Activated naive CD4-positive, alpha-beta T cell treated with anti-CD3 and anti-CD28 coated beads for 36 hours (primary cell): ENCODE measurements at regions of chr6 and their contacts with region 1.

Region 1: DNA sequence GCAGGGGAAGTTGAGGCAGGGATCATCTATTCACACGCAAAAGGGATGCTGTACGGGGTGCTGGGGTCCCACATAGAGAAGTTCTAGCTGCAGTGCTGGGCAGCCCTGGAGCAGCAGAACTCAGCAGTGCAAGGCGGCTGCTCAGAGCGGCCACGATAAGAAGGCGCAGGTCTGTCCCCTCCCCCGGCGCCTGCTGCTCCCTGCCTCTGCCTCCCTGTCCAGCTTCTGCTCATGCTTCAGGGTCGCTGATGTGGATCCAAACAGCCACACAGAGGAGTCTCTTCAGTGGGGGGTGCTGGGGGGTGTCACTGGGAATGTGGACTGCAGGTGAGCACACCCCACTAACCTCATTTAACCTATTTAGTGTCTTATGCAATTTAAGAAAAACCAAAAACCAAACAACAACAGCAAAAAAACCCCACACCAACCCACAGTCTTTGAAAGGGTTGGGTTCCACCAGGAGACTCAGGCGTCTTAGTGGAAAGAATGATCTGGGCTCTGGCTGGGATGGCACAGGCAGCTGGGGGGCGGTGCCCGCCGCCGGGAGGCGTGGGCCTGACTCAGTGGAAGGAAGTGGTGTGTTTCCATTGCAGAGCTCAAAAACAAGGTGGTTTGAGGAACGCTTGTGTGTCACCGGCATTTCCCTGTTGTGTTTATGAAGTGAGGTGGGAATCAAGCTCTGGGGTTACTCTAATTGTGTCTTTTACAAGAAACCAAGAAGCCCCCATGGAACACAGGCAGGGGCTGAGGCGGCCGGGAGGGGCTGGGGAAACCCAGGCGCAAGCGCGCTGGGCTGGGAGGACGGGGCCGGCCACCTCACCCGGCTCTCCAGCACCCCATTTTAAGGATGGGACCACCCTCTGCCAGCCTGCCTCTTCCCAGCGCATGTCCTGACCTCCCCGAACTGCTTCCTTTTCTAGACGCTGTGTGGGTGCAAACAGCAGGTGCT is 55.1 kb downstream of the IRF4 start:
- DNase-seq: peak; percentile 96
- H3K4me3 Mint-ChIP-seq: peak overlapping the region; percentile 43
- H3K27ac Mint-ChIP-seq: peak overlapping the region; percentile 95
- H3K4me1 Mint-ChIP-seq: peaks cover 50% of the 10 kb centered on the region
- H3K27me3 Mint-ChIP-seq: no peaks in the 10 kb centered on the region

Region 2: DNA sequence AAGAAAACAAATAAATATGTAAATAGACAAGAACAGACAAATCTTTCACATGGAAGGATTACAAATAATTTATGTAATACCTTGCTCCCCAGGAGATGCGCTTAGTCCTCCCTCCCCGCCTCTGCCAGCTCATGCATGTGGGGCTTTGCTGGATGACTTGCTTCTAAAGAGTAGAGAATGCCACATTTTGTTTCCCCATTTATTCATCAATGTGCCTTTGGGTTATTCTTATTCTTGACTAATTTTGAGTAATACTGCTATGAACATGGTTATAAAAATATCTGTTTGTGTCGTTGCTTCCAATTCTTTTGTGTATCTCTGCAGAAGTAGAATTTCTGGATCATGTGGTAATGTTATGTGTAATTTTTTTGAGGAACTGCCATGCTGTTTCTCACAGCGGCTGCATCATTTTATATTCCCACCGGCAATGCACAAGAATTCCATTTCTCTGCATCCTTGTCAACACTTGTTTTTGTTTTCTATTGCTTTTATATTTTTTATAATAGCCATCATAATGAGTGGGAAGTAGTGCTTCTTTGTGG is 178.2 kb before region 1 on chr6:
- CTCF ChIA-PET with region 1: no interaction called
- intact Hi-C with region 1: no loop called
- DNase-seq: no peak
- H3K4me3 Mint-ChIP-seq: no peak overlapping the region
- H3K27ac Mint-ChIP-seq: no peak overlapping the region
- H3K4me1 Mint-ChIP-seq: peaks cover 21% of the 10 kb centered on the region
- H3K27me3 Mint-ChIP-seq: no peaks in the 10 kb centered on the region

Region 3: GRCh38 chr6:399785-400534 is 46.7 kb before region 1 on chr6:
- CTCF ChIA-PET with region 1: no interaction called
- intact Hi-C with region 1: loop called (anchors 1 kb)
- DNase-seq: peak; percentile 73
- H3K4me3 Mint-ChIP-seq: peak overlapping the region; percentile 56
- H3K27ac Mint-ChIP-seq: peak overlapping the region; percentile 89
- H3K4me1 Mint-ChIP-seq: peaks cover 91% of the 10 kb centered on the region
- H3K27me3 Mint-ChIP-seq: no peaks in the 10 kb centered on the region

Region 4: GRCh38 chr6:431986-432385 is 14.7 kb before region 1 on chr6:
- CTCF ChIA-PET with region 1: interaction called, 8 read pairs
- intact Hi-C with region 1: loop called (anchors 1 kb)
- DNase-seq: peak; percentile 88
- H3K4me3 Mint-ChIP-seq: no peak overlapping the region
- H3K27ac Mint-ChIP-seq: no peak overlapping the region
- H3K4me1 Mint-ChIP-seq: peaks cover 60% of the 10 kb centered on the region
- H3K27me3 Mint-ChIP-seq: no peaks in the 10 kb centered on the region

Region 5: GRCh38 chr6:484086-484745 is 37.5 kb after region 1 on chr6:
- CTCF ChIA-PET with region 1: interaction called, 11 read pairs
- intact Hi-C with region 1: loop called (anchors 1 kb)
- DNase-seq: peak; percentile 83
- H3K4me3 Mint-ChIP-seq: peak overlapping the region; percentile 35
- H3K27ac Mint-ChIP-seq: peak overlapping the region; percentile 99
- H3K4me1 Mint-ChIP-seq: peaks cover 87% of the 10 kb centered on the region
- H3K27me3 Mint-ChIP-seq: no peaks in the 10 kb centered on the region

Region 6: GRCh38 chr6:498795-499231 is 52.1 kb after region 1 on chr6:
- CTCF ChIA-PET with region 1: interaction called, 3 read pairs
- intact Hi-C with region 1: loop called (anchors 1 kb)
- DNase-seq: peak; percentile 80
- H3K4me3 Mint-ChIP-seq: peak overlapping the region; percentile 56
- H3K27ac Mint-ChIP-seq: peak overlapping the region; percentile 96
- H3K4me1 Mint-ChIP-seq: peaks cover 83% of the 10 kb centered on the region
- H3K27me3 Mint-ChIP-seq: no peaks in the 10 kb centered on the region

Region 7: DNA sequence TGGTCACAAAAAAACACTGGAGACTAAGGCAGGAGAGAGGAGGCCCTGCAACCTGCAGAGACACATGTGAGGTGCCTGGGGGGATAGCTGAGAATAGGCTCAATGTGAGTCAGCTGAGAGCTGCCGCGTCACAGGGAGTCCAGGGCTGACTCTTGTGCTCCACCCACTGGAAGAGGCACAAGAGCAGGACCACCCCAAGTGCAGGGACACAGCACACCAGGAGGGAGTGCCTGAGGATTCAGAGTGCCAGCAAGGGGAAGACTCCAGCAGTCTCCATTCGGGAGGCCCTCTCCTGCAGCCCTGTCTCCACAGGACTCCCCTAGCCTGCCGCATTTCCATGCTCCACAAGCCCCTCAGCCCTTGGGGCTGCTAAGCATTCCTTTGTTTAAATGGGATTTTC is 104.7 kb after region 1 on chr6:
- CTCF ChIA-PET with region 1: no interaction called
- intact Hi-C with region 1: loop called (anchors 1 kb)
- DNase-seq: peak; percentile 56
- H3K4me3 Mint-ChIP-seq: no peak overlapping the region
- H3K27ac Mint-ChIP-seq: peak overlapping the region; percentile 79
- H3K4me1 Mint-ChIP-seq: peaks cover 57% of the 10 kb centered on the region
- H3K27me3 Mint-ChIP-seq: no peaks in the 10 kb centered on the region

Region 8: DNA sequence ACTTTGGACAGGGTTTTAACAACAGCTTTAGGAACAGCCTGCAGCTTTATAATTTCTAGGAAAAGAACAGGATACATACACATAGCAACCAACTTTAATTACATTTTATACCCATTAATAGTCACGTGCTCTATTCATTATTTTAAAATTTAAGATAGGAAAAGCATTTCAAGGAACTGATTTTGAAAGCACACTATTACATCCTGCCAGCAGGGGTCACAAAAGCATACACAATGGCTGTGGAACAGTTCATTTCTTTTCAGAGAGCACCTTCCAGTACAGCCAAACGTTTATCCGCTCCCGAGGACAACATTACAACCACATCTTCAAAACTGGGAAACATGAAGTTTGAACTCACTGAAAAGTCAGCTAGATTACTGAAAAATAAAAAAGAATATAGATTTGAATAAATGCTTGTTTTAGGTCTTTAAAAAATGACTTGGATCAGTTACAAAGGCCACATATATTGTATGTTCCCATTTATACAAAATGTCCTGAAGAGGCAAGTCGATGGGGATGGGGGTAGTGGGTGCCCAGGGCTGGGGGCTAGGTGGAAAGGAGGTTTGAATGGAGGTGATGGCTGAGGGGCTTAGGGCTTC is 350.9 kb after region 1 on chr6:
- CTCF ChIA-PET with region 1: no interaction called
- intact Hi-C with region 1: no loop called
- DNase-seq: peak; percentile 68
- H3K4me3 Mint-ChIP-seq: no peak overlapping the region
- H3K27ac Mint-ChIP-seq: no peak overlapping the region
- H3K4me1 Mint-ChIP-seq: no peaks in the 10 kb centered on the region
- H3K27me3 Mint-ChIP-seq: peaks cover 51% of the 10 kb centered on the region